GM12878 (cell line): ENCODE measurements at regions of chr7 and their contacts with region 1.

Region 1: DNA sequence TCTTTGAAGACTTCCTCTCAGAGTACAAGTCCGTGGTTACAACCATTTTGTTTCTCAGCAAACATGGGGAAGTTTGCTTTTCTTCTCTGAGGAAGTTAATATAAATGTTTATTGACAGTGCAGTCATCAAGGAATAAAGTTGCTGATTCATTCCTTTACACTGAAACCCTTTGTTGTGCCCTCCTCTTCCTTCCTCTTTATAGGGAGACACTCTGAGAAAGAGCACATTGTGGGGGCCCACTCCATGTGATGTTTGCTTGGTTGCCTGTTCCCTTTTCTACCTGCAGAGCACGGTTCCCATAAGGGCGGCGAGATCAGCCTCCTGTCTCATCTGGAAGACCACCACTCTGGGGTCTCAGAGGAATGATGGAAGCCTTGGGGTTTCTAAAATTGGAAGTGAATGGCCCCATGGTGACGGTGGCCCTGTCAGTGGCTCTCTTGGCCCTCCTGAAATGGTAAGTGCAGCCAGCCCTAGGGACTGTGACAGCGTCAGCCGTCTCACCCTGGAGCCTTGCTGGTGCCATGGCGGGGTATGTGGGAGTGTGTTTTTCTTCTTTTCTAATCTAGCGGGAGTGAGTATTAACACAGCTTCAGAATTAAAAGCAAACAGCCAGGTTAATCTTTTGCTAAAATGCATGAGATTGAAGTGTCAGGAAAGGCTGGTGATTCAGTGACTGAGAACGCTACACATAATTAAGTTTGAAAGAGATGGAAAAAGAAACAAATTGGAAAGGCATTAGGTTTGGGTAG is at the start of gene TBXAS1:
- DNase-seq: no peak
- ATAC-seq: peak; percentile 74
- H3K4me3 ChIP-seq: peak within 1 kb of the TSS; percentile 54
- H3K27ac ChIP-seq: peak within 1 kb of the TSS; percentile 81
- H3K4me1 ChIP-seq: peaks cover 26% of the 10 kb centered on the region
- H3K27me3 ChIP-seq: peaks cover 0 to 1% of the 10 kb centered on the region in 2 experiments; a peak in 1 of 4 replicates
- CTCF ChIP-seq: no peak
- EP300 ChIP-seq: no peak
- POLR2A ChIP-seq: peak; percentile 63; the same call in 1 of the 2 replicates
- RAD21 ChIP-seq: no peak
- polyA plus RNA-seq, gene TBXAS1: 6.8 to 8.3 TPM

Region 2: GRCh38 chr7:139855498-139856270 is 26.5 kb after region 1 on chr7:
- CTCF ChIA-PET with region 1: no interaction called
- POLR2A ChIA-PET with region 1: interaction called, 3 read pairs
- RAD21 ChIA-PET with region 1: interaction called, 3 read pairs
- SMC1A ChIA-PET with region 1: interaction called, 10 read pairs
- in situ Hi-C with region 1: no loop called
- intact Hi-C with region 1: no loop called
- DNase-seq: peak; percentile 51
- ATAC-seq: peak; percentile 98
- H3K4me3 ChIP-seq: no peak overlapping the region
- H3K27ac ChIP-seq: peak overlapping the region; percentile 48; the same call in 1 of the 2 replicates
- H3K4me1 ChIP-seq: peaks cover 10% of the 10 kb centered on the region
- H3K27me3 ChIP-seq: no peaks in the 10 kb centered on the region
- CTCF ChIP-seq: no peak
- EP300 ChIP-seq: no peak
- POLR2A ChIP-seq: no peak
- RAD21 ChIP-seq: no peak

Region 3: DNA sequence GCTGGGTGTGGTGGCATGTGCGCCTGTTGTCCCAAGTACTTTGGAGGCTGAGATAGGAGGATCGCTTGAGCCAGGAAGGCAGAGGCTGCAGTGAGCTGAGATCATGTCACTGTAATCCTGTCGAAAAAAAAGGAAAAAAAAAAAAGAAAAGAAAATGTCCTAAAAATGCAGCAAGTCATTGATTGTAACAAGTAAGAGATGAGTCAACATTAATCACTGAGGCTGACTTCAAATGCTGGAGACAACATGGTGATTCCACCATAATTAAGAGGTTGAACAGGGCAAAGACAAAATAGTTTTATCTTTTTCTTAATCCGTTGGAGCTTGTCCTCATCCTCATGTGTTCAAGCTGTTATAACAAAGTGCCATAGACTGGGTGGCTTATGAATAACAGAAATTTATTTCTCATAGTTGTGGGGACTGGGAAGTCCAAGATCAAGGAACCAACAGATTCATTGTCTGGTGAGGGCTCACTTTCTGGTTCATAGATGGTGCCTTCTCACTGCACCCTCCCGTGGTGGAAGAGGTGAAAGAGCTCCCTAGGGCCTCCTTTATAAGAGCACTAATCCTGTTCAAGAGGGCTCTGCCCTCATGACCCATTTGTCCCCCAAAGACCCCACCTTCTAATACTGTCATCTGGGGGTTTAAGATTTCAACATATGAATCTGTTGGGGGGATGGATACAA is 60.1 kb after region 1 on chr7:
- CTCF ChIA-PET with region 1: no interaction called
- POLR2A ChIA-PET with region 1: no interaction called
- RAD21 ChIA-PET with region 1: interaction called, 8 read pairs
- SMC1A ChIA-PET with region 1: interaction called, 11 read pairs
- in situ Hi-C with region 1: no loop called
- intact Hi-C with region 1: no loop called
- DNase-seq: no peak
- ATAC-seq: no peak
- H3K4me3 ChIP-seq: no peak overlapping the region
- H3K27ac ChIP-seq: no peak overlapping the region
- H3K4me1 ChIP-seq: peaks cover 5% of the 10 kb centered on the region; the same call in 1 of the 2 replicates
- H3K27me3 ChIP-seq: no peaks in the 10 kb centered on the region
- CTCF ChIP-seq: no peak
- EP300 ChIP-seq: no peak
- POLR2A ChIP-seq: no peak
- RAD21 ChIP-seq: 0 out of 2 replicates have a peak, but pooled peaks have one; percentile 1